Breast epithelium (tissue), 4 donors: ENCODE measurements at regions of chr5 and their contacts with region 1.

Region 1: GRCh38 chr5:96151891-96152290 is 190.2 kb upstream of the ELL2 start:
- DNase-seq: no peak
- H3K4me3 ChIP-seq: no peak overlapping the region
- H3K27ac ChIP-seq: no peak overlapping the region
- H3K4me1 ChIP-seq: no peaks in the 10 kb centered on the region
- H3K27me3 ChIP-seq: no peaks in the 10 kb centered on the region
- CTCF ChIP-seq: no peak
- POLR2A ChIP-seq: no peak

Region 2: GRCh38 chr5:96562614-96563013 is 410.7 kb after region 1 on chr5:
- intact Hi-C with region 1: loop called (anchors 5 kb)
- DNase-seq: no peak
- H3K4me3 ChIP-seq: no peak overlapping the region
- H3K27ac ChIP-seq: no peak overlapping the region
- H3K4me1 ChIP-seq: no peaks in the 10 kb centered on the region
- H3K27me3 ChIP-seq: no peaks in the 10 kb centered on the region
- CTCF ChIP-seq: no peak
- POLR2A ChIP-seq: no peak

Region 3: DNA sequence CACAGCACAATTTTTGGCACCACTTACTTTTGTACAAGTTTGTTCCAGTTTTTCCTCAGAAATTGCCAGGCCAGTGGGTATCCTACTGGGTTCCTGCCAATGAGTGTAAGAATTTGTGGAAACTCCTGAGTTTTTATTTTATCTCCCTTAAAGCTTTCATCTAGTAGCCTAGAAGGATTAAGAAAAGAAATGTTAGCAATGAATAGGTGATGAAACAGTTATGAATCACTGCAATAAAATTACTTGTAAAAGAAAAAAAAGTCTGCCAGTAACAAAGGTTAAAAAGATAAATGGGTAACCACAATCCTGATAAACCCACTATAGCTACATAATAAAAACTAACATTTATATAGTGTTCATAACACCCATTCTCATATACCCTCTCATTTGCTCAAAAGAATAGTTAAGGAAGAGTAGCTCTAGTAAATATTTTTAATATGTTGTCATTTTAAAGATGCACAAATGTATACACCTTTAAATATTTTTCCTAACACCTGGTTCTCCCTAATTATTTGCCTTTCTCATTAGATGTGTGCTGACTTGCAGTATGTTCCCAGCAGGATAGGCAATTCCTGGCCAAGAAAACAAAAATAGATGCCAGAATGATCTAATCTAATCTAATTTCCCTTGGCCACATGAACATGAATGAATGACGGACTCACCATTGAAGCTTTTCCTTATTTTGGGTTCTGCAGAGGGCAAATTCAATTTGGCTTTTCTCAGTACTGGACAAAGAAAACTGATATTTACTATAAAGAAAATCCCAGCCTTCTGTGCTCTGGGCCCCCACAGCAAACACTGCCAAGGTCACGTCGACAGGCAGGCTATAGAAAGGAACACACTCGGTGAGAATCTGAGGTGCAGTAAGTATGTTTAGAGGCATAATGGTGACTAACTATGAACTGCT is 629.4 kb after region 1 on chr5:
- intact Hi-C with region 1: no loop called
- DNase-seq: no peak
- H3K4me3 ChIP-seq: no peak overlapping the region
- H3K27ac ChIP-seq: peak overlapping the region; percentile 11 to 68
- H3K4me1 ChIP-seq: no peaks in the 10 kb centered on the region
- H3K27me3 ChIP-seq: no peaks in the 10 kb centered on the region
- CTCF ChIP-seq: no peak
- POLR2A ChIP-seq: no peak

Region 4: GRCh38 chr5:97476852-97477534 is 1325.1 kb after region 1 on chr5:
- intact Hi-C with region 1: no loop called
- DNase-seq: no peak
- H3K4me3 ChIP-seq: no peak overlapping the region
- H3K27ac ChIP-seq: no peak overlapping the region
- H3K4me1 ChIP-seq: no peaks in the 10 kb centered on the region
- H3K27me3 ChIP-seq: no peaks in the 10 kb centered on the region
- CTCF ChIP-seq: no peak
- POLR2A ChIP-seq: no peak